A549 (cell line): ENCODE measurements at regions of chr3 and their contacts with region 1.

Region 1: GRCh38 chr3:58414538-58415197 is 19.0 kb downstream of the PDHB start:
- DNase-seq: peak; percentile 26 to 51
- ATAC-seq: peak; percentile 62 to 84; a peak in 4 of 6 replicates
- H3K4me3 ChIP-seq: no peak overlapping the region
- H3K27ac ChIP-seq: no peak overlapping the region
- H3K4me1 ChIP-seq: no peaks in the 10 kb centered on the region
- CTCF ChIP-seq: peak; percentile 63
- EP300 ChIP-seq: no peak
- POLR2A ChIP-seq: no peak
- RAD21 ChIP-seq: peak; percentile 42 to 62; a peak in 4 of 5 replicates

Region 2: GRCh38 chr3:58049143-58049785 is 365.4 kb before region 1 on chr3:
- CTCF ChIA-PET with region 1: no interaction called
- POLR2A ChIA-PET with region 1: no interaction called
- DNase-seq: peak; percentile 66 to 83
- ATAC-seq: peak; percentile 46 to 63
- H3K4me3 ChIP-seq: peak overlapping the region; percentile 4; the same call in 1 of the 3 replicates
- H3K27ac ChIP-seq: peak overlapping the region; percentile 72 to 81
- H3K4me1 ChIP-seq: peaks cover 100% of the 10 kb centered on the region
- CTCF ChIP-seq: no peak
- EP300 ChIP-seq: peak in 1 of 2 experiments; percentile 41; a peak in 1 of 5 replicates
- POLR2A ChIP-seq: no peak
- RAD21 ChIP-seq: no peak

Region 3: GRCh38 chr3:58322793-58323192 is 91.9 kb before region 1 on chr3:
- CTCF ChIA-PET with region 1: interaction called, 21 read pairs
- POLR2A ChIA-PET with region 1: no interaction called
- DNase-seq: no peak
- ATAC-seq: peak in 1 of 2 experiments; percentile 43; a peak in 1 of 6 replicates
- H3K4me3 ChIP-seq: no peak overlapping the region
- H3K27ac ChIP-seq: no peak overlapping the region
- H3K4me1 ChIP-seq: no peaks in the 10 kb centered on the region
- CTCF ChIP-seq: no peak
- EP300 ChIP-seq: no peak
- POLR2A ChIP-seq: no peak
- RAD21 ChIP-seq: no peak

Region 4: GRCh38 chr3:58392181-58392580 is 22.5 kb before region 1 on chr3:
- CTCF ChIA-PET with region 1: interaction called, 12 read pairs
- POLR2A ChIA-PET with region 1: no interaction called
- DNase-seq: no peak
- ATAC-seq: no peak
- H3K4me3 ChIP-seq: no peak overlapping the region
- H3K27ac ChIP-seq: no peak overlapping the region
- H3K4me1 ChIP-seq: peaks cover 7% of the 10 kb centered on the region; the same call in 1 of the 3 replicates
- CTCF ChIP-seq: no peak
- EP300 ChIP-seq: no peak
- POLR2A ChIP-seq: no peak
- RAD21 ChIP-seq: no peak

Region 5: GRCh38 chr3:58404396-58404795 is 10.3 kb before region 1 on chr3:
- CTCF ChIA-PET with region 1: interaction called, 10 read pairs
- POLR2A ChIA-PET with region 1: no interaction called
- DNase-seq: no peak
- ATAC-seq: no peak
- H3K4me3 ChIP-seq: no peak overlapping the region
- H3K27ac ChIP-seq: no peak overlapping the region
- H3K4me1 ChIP-seq: no peaks in the 10 kb centered on the region
- CTCF ChIP-seq: no peak
- EP300 ChIP-seq: no peak
- POLR2A ChIP-seq: no peak
- RAD21 ChIP-seq: no peak